Ascending aorta (tissue), 2 donors: ENCODE measurements at regions of chr9 and their contacts with region 1.

Region 1: GRCh38 chr9:9790216-9790872 is 822.5 kb downstream of the PTPRD start:
- DNase-seq: no peak
- H3K4me3 ChIP-seq: no peak overlapping the region
- H3K27ac ChIP-seq: no peak overlapping the region
- H3K4me1 ChIP-seq: no peaks in the 10 kb centered on the region
- H3K27me3 ChIP-seq: no peaks in the 10 kb centered on the region
- CTCF ChIP-seq: peak; percentile 55 to 84 (median 74)

Region 2: GRCh38 chr9:9605681-9606080 is 184.7 kb before region 1 on chr9:
- intact Hi-C with region 1: loop called (anchors 1 kb)
- DNase-seq: no peak
- H3K4me3 ChIP-seq: no peak overlapping the region
- H3K27ac ChIP-seq: no peak overlapping the region
- H3K4me1 ChIP-seq: no peaks in the 10 kb centered on the region
- H3K27me3 ChIP-seq: no peaks in the 10 kb centered on the region
- CTCF ChIP-seq: no peak